Mammary epithelial cell (primary cell): ENCODE measurements at regions of chr2 and their contacts with region 1.

Region 1: GRCh38 chr2:121617042-121617599 is 32.1 kb downstream of the CLASP1 start:
- DNase-seq: no peak
- H3K4me3 ChIP-seq: no peak overlapping the region
- H3K27ac ChIP-seq: no peak overlapping the region
- H3K4me1 ChIP-seq: no peaks in the 10 kb centered on the region
- H3K27me3 ChIP-seq: no peaks in the 10 kb centered on the region
- CTCF ChIP-seq: no peak

Region 2: GRCh38 chr2:121558329-121558728 is 58.8 kb before region 1 on chr2:
- CTCF ChIA-PET with region 1: no interaction called
- dilution Hi-C with region 1: loop called (anchors 5 kb)
- in situ Hi-C with region 1: no loop called
- intact Hi-C with region 1: no loop called
- DNase-seq: no peak
- H3K4me3 ChIP-seq: no peak overlapping the region
- H3K27ac ChIP-seq: no peak overlapping the region
- H3K4me1 ChIP-seq: peaks cover 23% of the 10 kb centered on the region
- H3K27me3 ChIP-seq: no peaks in the 10 kb centered on the region
- CTCF ChIP-seq: no peak

Region 3: GRCh38 chr2:121570036-121570666 is 47.0 kb before region 1 on chr2:
- CTCF ChIA-PET with region 1: no interaction called
- dilution Hi-C with region 1: no loop called
- in situ Hi-C with region 1: no loop called
- intact Hi-C with region 1: no loop called
- DNase-seq: no peak
- H3K4me3 ChIP-seq: no peak overlapping the region
- H3K27ac ChIP-seq: no peak overlapping the region
- H3K4me1 ChIP-seq: no peaks in the 10 kb centered on the region
- H3K27me3 ChIP-seq: no peaks in the 10 kb centered on the region
- CTCF ChIP-seq: no peak

Region 4: GRCh38 chr2:121634354-121635307 is 17.5 kb after region 1 on chr2:
- CTCF ChIA-PET with region 1: no interaction called
- dilution Hi-C with region 1: no loop called
- in situ Hi-C with region 1: no loop called
- intact Hi-C with region 1: loop called (anchors 2 kb)
- DNase-seq: peak; percentile 81
- H3K4me3 ChIP-seq: no peak overlapping the region
- H3K27ac ChIP-seq: peak overlapping the region; percentile 86
- H3K4me1 ChIP-seq: peaks cover 31% of the 10 kb centered on the region
- H3K27me3 ChIP-seq: no peaks in the 10 kb centered on the region
- CTCF ChIP-seq: no peak